H1 (cell line): ENCODE measurements at regions of chr1 and their contacts with region 1.

Region 1: DNA sequence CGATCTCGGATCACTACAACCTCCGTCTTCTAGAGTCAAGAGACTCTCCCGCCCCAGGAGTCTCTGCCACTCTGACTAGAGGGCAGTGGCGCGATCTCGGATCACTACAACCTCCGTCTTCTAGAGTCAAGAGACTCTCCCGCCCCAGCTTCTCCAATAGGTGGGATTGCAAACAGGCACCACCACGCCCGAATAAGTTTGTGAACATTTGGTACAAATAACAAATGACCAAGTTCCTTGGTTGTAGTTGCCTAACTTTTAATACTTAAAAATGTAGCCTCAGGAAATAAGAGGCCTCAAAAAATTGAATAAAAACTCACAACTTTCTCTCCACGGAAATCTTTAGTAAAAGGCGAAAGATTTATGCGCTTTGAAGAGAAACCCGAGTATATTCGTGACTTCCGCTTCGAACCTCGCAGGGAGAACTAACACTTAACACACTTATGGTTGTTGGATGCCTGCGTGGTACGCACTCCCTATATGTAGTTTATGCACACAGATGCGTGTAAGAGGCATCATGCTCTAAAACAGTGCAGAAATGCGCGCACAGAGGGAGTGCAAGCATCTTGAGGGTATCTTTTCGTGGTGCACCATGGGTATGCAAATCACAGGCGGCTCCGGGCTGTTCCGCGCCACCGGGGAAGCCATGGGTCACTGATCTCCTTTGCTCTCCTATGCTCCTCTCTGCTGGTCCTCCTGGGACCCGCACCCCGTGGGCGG is 11.4 kb downstream of the BTBD19 start:
- DNase-seq: peak; percentile 79 to 91
- H3K4me3 ChIP-seq: peak overlapping the region; percentile 40 to 64 (median 47)
- H3K27ac ChIP-seq: peak overlapping the region; percentile 100
- H3K4me1 ChIP-seq: peaks cover 2 to 5% (median 3%) of the 10 kb centered on the region in 4 experiments; a peak in 5 of 7 replicates
- H3K27me3 ChIP-seq: no peaks in the 10 kb centered on the region; a peak in 2 of 7 replicates
- CTCF ChIP-seq: 0 out of 4 replicates have a peak, but pooled peaks of 1 of the 3 experiments have one; percentile 5
- EP300 ChIP-seq: peak in 1 of 2 experiments; percentile 79; a peak in 1 of 3 replicates
- POLR2A ChIP-seq: peak; percentile 99 to 100
- RAD21 ChIP-seq: peak in 1 of 2 experiments; percentile 15; a peak in 3 of 4 replicates

Region 2: GRCh38 chr1:44730741-44731512 is 88.8 kb before region 1 on chr1 and contains the start of gene RNU5D-1:
- CTCF ChIA-PET with region 1: interaction called, 11 read pairs
- POLR2A ChIA-PET with region 1: interaction called, 92 read pairs
- DNase-seq: peak in 1 of 2 experiments; percentile 94
- H3K4me3 ChIP-seq: peak within 1 kb of the TSS in 1 of 4 experiments; percentile 31; a peak in 1 of 8 replicates
- H3K27ac ChIP-seq: peak within 1 kb of the TSS; percentile 94
- H3K4me1 ChIP-seq: peaks cover 0 to 3% (median under 1%) of the 10 kb centered on the region in 4 experiments; a peak in 4 of 7 replicates
- H3K27me3 ChIP-seq: no peaks in the 10 kb centered on the region
- CTCF ChIP-seq: peak; percentile 48 to 80 (median 55)
- EP300 ChIP-seq: 0 out of 3 replicates have a peak, but pooled peaks of 1 of the 2 experiments have one; percentile 30
- POLR2A ChIP-seq: peak; percentile 99
- RAD21 ChIP-seq: peak; percentile 14 to 32; a peak in 1 of 4 replicates
- total RNA-seq, gene RNU5D-1: 17.4 TPM in 1 of 2 replicates, not detected in the other

Region 3: GRCh38 chr1:44792783-44793714 is 26.7 kb before region 1 on chr1:
- CTCF ChIA-PET with region 1: interaction called, 51 read pairs
- POLR2A ChIA-PET with region 1: interaction called, 547 read pairs
- DNase-seq: no peak
- H3K4me3 ChIP-seq: no peak overlapping the region
- H3K27ac ChIP-seq: no peak overlapping the region; the same call in 1 of the 2 replicates
- H3K4me1 ChIP-seq: peaks cover 0 to 5% (median 5%) of the 10 kb centered on the region in 4 experiments
- H3K27me3 ChIP-seq: no peaks in the 10 kb centered on the region
- CTCF ChIP-seq: no peak
- EP300 ChIP-seq: no peak
- POLR2A ChIP-seq: no peak
- RAD21 ChIP-seq: no peak

Region 4: GRCh38 chr1:44807262-44808062 is 12.3 kb before region 1 on chr1 and contains the start of gene DYNLT4:
- CTCF ChIA-PET with region 1: interaction called, 31 read pairs
- POLR2A ChIA-PET with region 1: interaction called, 547 read pairs
- DNase-seq: peak in 1 of 2 experiments; percentile 89
- H3K4me3 ChIP-seq: peak within 1 kb of the TSS in 2 of 4 experiments; percentile 5 to 37; a peak in 3 of 8 replicates
- H3K27ac ChIP-seq: peak within 1 kb of the TSS; percentile 96
- H3K4me1 ChIP-seq: peaks cover 10 to 37% (median 28%) of the 10 kb centered on the region in 4 experiments
- H3K27me3 ChIP-seq: peaks cover 0 to 4% (median 1%) of the 10 kb centered on the region in 4 experiments; a peak in 3 of 7 replicates
- CTCF ChIP-seq: no peak
- EP300 ChIP-seq: peak; percentile 36 to 89; a peak in 2 of 3 replicates
- POLR2A ChIP-seq: peak in 1 of 2 experiments; percentile 80; a peak in 2 of 3 replicates
- RAD21 ChIP-seq: no peak
- total RNA-seq, gene DYNLT4: not detected in 2 replicates

Region 5: DNA sequence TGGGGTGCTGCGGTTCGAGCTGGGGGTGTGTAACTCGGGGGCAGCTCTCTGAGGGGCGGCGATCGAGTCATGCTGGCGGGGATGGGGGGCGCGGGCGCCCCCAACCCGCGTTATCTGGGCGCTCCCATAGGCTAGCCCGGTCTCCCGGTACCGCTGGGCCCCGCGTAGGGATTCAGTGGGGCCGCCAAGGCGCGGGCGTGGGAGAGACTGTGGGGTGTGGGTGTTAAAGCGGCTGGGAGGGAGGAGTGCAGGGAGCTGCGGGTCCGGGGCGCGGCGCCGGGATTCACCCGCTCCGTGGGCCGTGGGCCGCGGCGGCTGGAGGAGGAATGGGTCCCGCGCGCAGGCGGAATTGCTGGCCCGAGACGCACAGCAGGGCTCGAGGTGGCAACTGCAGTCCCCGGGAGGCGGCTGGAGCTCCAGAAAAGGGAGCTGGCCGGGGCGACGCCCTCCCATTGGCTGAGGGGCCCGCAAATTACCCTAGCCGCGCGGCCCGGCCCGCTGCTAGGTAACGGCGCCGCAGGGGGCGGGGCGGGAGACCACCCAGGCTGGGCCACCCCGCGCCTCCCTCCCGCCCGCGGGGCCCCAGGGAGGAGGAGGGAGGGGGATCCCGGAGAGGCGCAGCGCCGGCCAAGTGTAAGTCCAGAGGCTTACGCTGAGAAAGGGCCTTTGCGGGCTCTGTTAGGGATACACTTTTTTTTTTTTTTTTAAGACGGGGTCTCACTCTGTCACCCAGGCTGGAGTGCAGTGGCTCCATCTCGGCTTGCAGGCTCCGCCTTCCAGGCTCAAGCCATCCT is 23.3 kb after region 1 on chr1 and contains the start of gene PTCH2:
- CTCF ChIA-PET with region 1: interaction called, 3 read pairs
- POLR2A ChIA-PET with region 1: interaction called, 55 read pairs
- DNase-seq: peak; percentile 70 to 95
- H3K4me3 ChIP-seq: peak within 1 kb of the TSS; percentile 59 to 74 (median 70)
- H3K27ac ChIP-seq: no peak within 1 kb of the TSS
- H3K4me1 ChIP-seq: peaks cover 0 to 5% (median 0%) of the 10 kb centered on the region in 4 experiments; a peak in 2 of 7 replicates
- H3K27me3 ChIP-seq: peaks cover 0 to 10% (median 6%) of the 10 kb centered on the region in 4 experiments; a peak in 3 of 7 replicates
- CTCF ChIP-seq: no peak
- EP300 ChIP-seq: no peak
- POLR2A ChIP-seq: no peak
- RAD21 ChIP-seq: no peak
- total RNA-seq, gene PTCH2: 1.2 and 1.5 TPM in 2 replicates